ENCODE measurements at regions of chr12 and their contacts with region 1.

Region 1: GRCh38 chr12:92987362-92987761 is 58.3 kb upstream of the EEA1 start:
- DNase-seq: no peak
- ATAC-seq: peak; percentile 26
- H3K4me3 Mint-ChIP-seq: peak overlapping the region; percentile 69
- H3K27ac Mint-ChIP-seq: peak overlapping the region; percentile 89
- H3K4me1 Mint-ChIP-seq: peaks cover 33% of the 10 kb centered on the region
- H3K27me3 Mint-ChIP-seq: no peaks in the 10 kb centered on the region
- CTCF ChIP-seq: peak; percentile 93

Region 2: GRCh38 chr12:92784795-92785562 is 202.4 kb before region 1 on chr12:
- CTCF ChIA-PET with region 1: interaction called, 9 read pairs
- POLR2A ChIA-PET with region 1: no interaction called
- intact Hi-C with region 1: loop called (anchors 1 kb)
- DNase-seq: no peak
- ATAC-seq: peak; percentile 98
- H3K4me3 Mint-ChIP-seq: no peak overlapping the region
- H3K27ac Mint-ChIP-seq: no peak overlapping the region
- H3K4me1 Mint-ChIP-seq: no peaks in the 10 kb centered on the region
- H3K27me3 Mint-ChIP-seq: no peaks in the 10 kb centered on the region
- CTCF ChIP-seq: no peak

Region 3: GRCh38 chr12:92943482-92944250 is 43.7 kb before region 1 on chr12:
- CTCF ChIA-PET with region 1: no interaction called
- POLR2A ChIA-PET with region 1: interaction called, 3 read pairs
- intact Hi-C with region 1: loop called (anchors 1 kb)
- DNase-seq: no peak
- ATAC-seq: no peak
- H3K4me3 Mint-ChIP-seq: no peak overlapping the region
- H3K27ac Mint-ChIP-seq: peak overlapping the region; percentile 46
- H3K4me1 Mint-ChIP-seq: peaks cover 36% of the 10 kb centered on the region
- H3K27me3 Mint-ChIP-seq: no peaks in the 10 kb centered on the region
- CTCF ChIP-seq: no peak

Region 4: DNA sequence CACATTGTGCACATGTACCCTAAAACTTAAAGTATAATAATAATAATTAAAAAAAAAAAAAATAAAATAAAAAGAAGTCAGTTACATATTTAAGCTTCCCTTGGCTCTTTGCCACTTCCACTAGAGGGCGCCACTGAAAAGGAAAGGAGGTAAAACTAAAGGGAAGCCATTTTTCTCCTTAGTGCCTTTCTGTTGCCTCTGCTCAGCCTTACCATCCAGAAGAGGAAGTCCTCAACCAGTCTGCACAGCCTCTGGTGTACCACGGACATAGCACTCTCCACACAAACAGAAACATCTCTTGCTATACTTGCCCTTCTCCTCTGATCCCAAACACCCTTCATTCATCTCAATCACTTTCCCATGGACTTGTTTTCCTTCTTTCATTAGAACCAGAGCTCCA is 110.7 kb after region 1 on chr12:
- CTCF ChIA-PET with region 1: interaction called, 38 read pairs
- POLR2A ChIA-PET with region 1: interaction called, 12 read pairs
- intact Hi-C with region 1: loop called (anchors 1 kb)
- DNase-seq: peak; percentile 23
- ATAC-seq: peak; percentile 98
- H3K4me3 Mint-ChIP-seq: no peak overlapping the region
- H3K27ac Mint-ChIP-seq: peak overlapping the region; percentile 46
- H3K4me1 Mint-ChIP-seq: peaks cover 18% of the 10 kb centered on the region
- H3K27me3 Mint-ChIP-seq: no peaks in the 10 kb centered on the region
- CTCF ChIP-seq: peak; percentile 34

Region 5: GRCh38 chr12:93358058-93358457 is 370.7 kb after region 1 on chr12:
- CTCF ChIA-PET with region 1: no interaction called
- POLR2A ChIA-PET with region 1: interaction called, 13 read pairs
- intact Hi-C with region 1: no loop called
- DNase-seq: no peak
- ATAC-seq: no peak
- H3K4me3 Mint-ChIP-seq: no peak overlapping the region
- H3K27ac Mint-ChIP-seq: no peak overlapping the region
- H3K4me1 Mint-ChIP-seq: no peaks in the 10 kb centered on the region
- H3K27me3 Mint-ChIP-seq: no peaks in the 10 kb centered on the region
- CTCF ChIP-seq: no peak

Region 6: GRCh38 chr12:93397412-93397811 is 410.1 kb after region 1 on chr12:
- CTCF ChIA-PET with region 1: interaction called, 95 read pairs
- POLR2A ChIA-PET with region 1: interaction called, 15 read pairs
- intact Hi-C with region 1: loop called (anchors 1 kb)
- DNase-seq: no peak
- ATAC-seq: no peak
- H3K4me3 Mint-ChIP-seq: no peak overlapping the region
- H3K27ac Mint-ChIP-seq: no peak overlapping the region
- H3K4me1 Mint-ChIP-seq: peaks cover 11% of the 10 kb centered on the region
- H3K27me3 Mint-ChIP-seq: no peaks in the 10 kb centered on the region
- CTCF ChIP-seq: no peak

Region 7: GRCh38 chr12:93484315-93484981 is 497.1 kb after region 1 on chr12:
- CTCF ChIA-PET with region 1: no interaction called
- POLR2A ChIA-PET with region 1: no interaction called
- intact Hi-C with region 1: no loop called
- DNase-seq: no peak
- ATAC-seq: no peak
- H3K4me3 Mint-ChIP-seq: no peak overlapping the region
- H3K27ac Mint-ChIP-seq: no peak overlapping the region
- H3K4me1 Mint-ChIP-seq: no peaks in the 10 kb centered on the region
- H3K27me3 Mint-ChIP-seq: no peaks in the 10 kb centered on the region
- CTCF ChIP-seq: no peak

Region 8: GRCh38 chr12:93569656-93570551 is 582.5 kb after region 1 on chr12:
- CTCF ChIA-PET with region 1: no interaction called
- POLR2A ChIA-PET with region 1: interaction called, 3 read pairs
- intact Hi-C with region 1: loop called (anchors 1 kb)
- DNase-seq: peak; percentile 60
- ATAC-seq: peak; percentile 42
- H3K4me3 Mint-ChIP-seq: peak overlapping the region; percentile 88
- H3K27ac Mint-ChIP-seq: no peak overlapping the region
- H3K4me1 Mint-ChIP-seq: peaks cover 17% of the 10 kb centered on the region
- H3K27me3 Mint-ChIP-seq: peaks cover 26% of the 10 kb centered on the region
- CTCF ChIP-seq: no peak